Mammary epithelial cell (primary cell): ENCODE measurements at regions of chr2 and their contacts with region 1.

Region 1: GRCh38 chr2:199791326-199791725 is 59.7 kb downstream of the FTCDNL1 start:
- DNase-seq: no peak
- H3K4me3 ChIP-seq: no peak overlapping the region
- H3K27ac ChIP-seq: no peak overlapping the region
- H3K4me1 ChIP-seq: no peaks in the 10 kb centered on the region
- H3K27me3 ChIP-seq: peaks cover 2% of the 10 kb centered on the region
- CTCF ChIP-seq: no peak

Region 2: DNA sequence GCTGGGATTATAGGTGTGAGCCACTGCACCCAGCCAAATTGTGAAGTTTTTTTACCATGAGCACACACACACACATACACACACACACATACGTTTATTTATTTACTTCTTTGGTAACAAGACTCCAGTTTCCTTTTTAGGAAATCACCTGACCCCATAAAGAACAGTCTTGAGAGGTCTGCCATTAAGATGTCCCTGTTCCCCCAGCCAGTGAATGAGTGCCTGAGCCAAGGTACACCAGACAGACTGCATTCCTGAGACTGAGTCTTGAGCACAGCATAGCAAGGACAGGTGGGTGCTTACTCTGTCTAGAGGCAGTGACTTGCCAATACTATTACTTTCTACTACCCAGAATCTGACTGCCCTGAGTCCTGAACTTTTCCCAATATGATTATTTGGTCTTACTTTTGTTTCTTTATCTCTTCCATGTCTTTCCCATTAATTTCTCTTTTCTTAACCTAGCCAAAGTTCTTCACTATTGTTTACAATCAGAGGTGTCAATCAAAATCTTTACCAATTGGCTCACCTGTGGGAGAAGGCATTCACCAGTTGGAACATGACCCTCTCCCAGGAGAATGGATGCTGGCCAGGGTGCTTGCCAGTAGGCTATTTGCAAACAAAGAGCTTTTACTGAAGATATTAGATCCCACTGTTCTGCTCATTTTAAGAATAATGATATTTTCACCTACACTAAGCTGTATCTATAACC is 166.2 kb before region 1 on chr2:
- CTCF ChIA-PET with region 1: no interaction called
- dilution Hi-C with region 1: no loop called
- in situ Hi-C with region 1: no loop called
- intact Hi-C with region 1: no loop called
- DNase-seq: no peak
- H3K4me3 ChIP-seq: no peak overlapping the region
- H3K27ac ChIP-seq: no peak overlapping the region
- H3K4me1 ChIP-seq: no peaks in the 10 kb centered on the region
- H3K27me3 ChIP-seq: no peaks in the 10 kb centered on the region
- CTCF ChIP-seq: no peak

Region 3: DNA sequence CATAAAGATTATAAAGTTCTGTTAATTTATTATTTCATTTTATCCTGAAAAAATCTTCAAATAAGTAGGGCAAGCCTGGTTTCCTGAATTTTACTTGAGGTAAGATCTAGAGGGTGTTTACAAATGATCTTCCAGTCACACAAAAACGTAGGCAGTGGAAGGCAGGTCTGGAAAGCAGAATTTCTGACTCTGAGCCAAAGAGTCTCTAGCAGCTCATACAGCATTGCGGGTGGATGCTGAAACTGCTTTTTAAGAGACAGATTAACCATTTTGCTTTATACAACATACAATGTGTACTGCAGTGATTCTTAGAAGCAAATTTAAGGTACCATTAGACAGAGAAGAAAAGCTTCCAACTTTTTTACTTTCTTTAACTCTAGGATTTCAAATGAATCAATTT is 57.3 kb before region 1 on chr2:
- CTCF ChIA-PET with region 1: interaction called, 12 read pairs
- dilution Hi-C with region 1: no loop called
- in situ Hi-C with region 1: no loop called
- intact Hi-C with region 1: no loop called
- DNase-seq: no peak
- H3K4me3 ChIP-seq: no peak overlapping the region
- H3K27ac ChIP-seq: no peak overlapping the region
- H3K4me1 ChIP-seq: no peaks in the 10 kb centered on the region
- H3K27me3 ChIP-seq: no peaks in the 10 kb centered on the region
- CTCF ChIP-seq: no peak

Region 4: DNA sequence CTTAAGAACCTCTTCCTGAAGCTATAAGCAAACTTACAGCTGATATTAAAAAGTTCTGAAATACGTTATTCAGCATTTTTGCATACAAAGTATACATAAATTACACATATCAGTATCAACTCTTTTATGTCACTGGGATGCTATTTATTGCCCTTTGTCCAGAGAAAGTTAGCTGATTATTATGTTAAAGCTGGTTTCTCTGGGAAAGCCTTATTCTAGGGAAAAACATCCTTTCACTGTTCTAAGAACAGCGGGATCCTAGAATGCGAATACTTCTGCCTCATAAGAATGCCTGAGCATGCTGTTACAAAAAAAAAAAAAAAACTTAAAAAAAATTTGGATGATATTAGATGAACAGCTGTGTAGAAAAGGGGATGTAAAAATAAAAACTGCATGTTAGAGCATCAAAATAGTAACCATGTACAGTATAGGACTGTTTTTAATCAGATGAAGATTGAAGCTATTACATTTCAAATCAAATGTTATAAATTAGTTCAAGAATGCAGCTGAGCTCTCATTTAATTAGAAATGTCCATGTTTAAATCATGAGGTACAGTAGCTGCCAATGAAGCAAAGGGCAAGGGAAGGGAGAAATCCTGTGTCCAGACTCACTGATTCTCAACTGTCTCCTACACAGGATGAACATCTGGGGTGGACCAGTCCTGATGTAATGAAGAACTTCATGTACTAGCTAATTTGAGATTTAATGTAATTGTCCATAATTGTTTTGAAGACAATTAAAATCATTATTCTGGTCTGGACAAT is 51.5 kb after region 1 on chr2:
- CTCF ChIA-PET with region 1: no interaction called
- dilution Hi-C with region 1: no loop called
- in situ Hi-C with region 1: no loop called
- intact Hi-C with region 1: no loop called
- DNase-seq: no peak
- H3K4me3 ChIP-seq: no peak overlapping the region
- H3K27ac ChIP-seq: no peak overlapping the region
- H3K4me1 ChIP-seq: no peaks in the 10 kb centered on the region
- H3K27me3 ChIP-seq: no peaks in the 10 kb centered on the region
- CTCF ChIP-seq: no peak